SK-N-SH (cell line): ENCODE measurements at regions of chr7 and their contacts with region 1.

Region 1: DNA sequence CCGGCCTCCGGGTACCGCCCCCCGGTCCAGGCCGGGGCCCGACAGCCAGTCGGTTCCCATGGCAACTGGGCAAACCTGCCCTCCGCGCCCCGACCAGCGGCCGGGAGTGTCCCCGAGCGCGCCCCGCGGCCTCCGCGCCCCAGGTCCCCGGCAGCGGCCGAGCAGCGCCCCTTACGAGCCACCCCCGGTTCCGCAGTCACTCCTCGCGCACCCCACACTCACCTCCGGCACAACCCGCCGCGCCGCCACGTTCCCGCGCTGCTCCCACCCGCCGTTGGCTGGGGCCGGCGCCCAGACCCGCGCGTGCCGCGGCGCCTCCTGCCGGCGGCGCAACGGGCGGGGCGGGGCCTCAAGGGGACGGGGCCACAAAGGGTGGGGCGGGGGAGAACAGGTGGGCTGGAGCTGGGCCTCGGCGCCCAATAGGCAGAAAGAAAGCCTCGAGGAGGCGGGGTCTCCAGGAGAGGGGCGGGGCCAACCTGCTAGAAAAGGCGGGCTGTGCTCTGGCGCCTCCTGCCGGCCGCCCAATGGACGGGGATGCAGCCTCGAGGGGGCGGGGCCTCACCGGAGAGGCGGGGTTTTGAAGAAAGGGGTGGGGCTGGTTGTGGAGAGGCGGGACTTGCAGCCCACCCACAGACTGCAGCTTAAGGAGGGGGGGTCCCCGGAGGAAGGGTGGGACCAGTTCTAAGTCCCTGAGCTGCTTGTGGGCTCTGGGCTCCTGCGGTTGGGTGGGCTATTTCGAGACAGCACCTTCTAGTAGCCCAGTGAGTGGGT is at the start of gene RADIL:
- DNase-seq: peak; percentile 100
- H3K4me3 ChIP-seq: peak within 1 kb of the TSS; percentile 70 to 75
- H3K27ac ChIP-seq: peak within 1 kb of the TSS; percentile 89 to 97
- H3K4me1 ChIP-seq: peaks cover 5 to 31% of the 10 kb centered on the region in 2 experiments; a peak in 1 of 4 replicates
- H3K27me3 ChIP-seq: no peaks in the 10 kb centered on the region
- CTCF ChIP-seq: peak; percentile 98
- EP300 ChIP-seq: no peak
- RAD21 ChIP-seq: peak; percentile 85
- polyA plus RNA-seq, gene RADIL: 3.5 and 4.3 TPM in 2 replicates

Region 2: DNA sequence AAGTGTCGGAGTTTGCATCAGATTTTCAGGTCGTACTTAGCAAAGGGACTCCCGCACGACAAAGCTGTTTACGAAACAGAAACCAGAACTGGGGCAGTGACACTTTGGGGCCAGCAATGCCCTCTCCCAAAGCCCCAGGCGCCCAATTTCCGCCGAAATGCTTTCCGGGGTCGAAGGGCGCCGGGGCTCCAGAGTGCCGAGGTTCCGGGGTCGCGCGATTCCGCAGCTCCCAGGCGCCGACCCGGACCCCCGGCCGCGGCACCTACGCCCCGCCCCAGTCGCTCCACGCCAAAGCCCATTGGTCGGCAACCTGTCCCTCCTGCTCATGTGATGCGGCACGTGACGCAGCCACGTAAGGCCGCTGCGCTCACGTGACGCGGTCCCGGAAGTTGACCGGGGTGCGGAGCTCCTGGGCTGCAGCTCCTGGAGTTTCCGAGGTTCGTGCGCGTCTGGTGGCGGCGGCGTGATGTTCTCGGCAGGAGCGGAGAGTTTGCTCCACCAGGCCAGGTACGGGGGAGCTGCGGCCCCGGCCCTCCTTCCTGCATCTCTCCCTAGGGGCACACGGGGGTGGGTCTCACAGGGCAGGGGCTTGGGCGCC is 108.2 kb before region 1 on chr7 and contains the start of gene AP5Z1:
- CTCF ChIA-PET with region 1: interaction called, 11 read pairs
- POLR2A ChIA-PET with region 1: interaction called, 6 read pairs
- DNase-seq: peak; percentile 100
- H3K4me3 ChIP-seq: peak within 1 kb of the TSS; percentile 84 to 99
- H3K27ac ChIP-seq: peak within 1 kb of the TSS; percentile 87 to 89
- H3K4me1 ChIP-seq: peaks cover 9 to 18% of the 10 kb centered on the region in 2 experiments; a peak in 1 of 4 replicates
- H3K27me3 ChIP-seq: no peaks in the 10 kb centered on the region
- CTCF ChIP-seq: 0 out of 2 replicates have a peak, but pooled peaks have one; percentile 7
- EP300 ChIP-seq: peak in 1 of 2 experiments; percentile 24; a peak in 2 of 4 replicates
- RAD21 ChIP-seq: no peak
- polyA plus RNA-seq, gene AP5Z1: 29.5 and 36.7 TPM in 2 replicates

Region 3: DNA sequence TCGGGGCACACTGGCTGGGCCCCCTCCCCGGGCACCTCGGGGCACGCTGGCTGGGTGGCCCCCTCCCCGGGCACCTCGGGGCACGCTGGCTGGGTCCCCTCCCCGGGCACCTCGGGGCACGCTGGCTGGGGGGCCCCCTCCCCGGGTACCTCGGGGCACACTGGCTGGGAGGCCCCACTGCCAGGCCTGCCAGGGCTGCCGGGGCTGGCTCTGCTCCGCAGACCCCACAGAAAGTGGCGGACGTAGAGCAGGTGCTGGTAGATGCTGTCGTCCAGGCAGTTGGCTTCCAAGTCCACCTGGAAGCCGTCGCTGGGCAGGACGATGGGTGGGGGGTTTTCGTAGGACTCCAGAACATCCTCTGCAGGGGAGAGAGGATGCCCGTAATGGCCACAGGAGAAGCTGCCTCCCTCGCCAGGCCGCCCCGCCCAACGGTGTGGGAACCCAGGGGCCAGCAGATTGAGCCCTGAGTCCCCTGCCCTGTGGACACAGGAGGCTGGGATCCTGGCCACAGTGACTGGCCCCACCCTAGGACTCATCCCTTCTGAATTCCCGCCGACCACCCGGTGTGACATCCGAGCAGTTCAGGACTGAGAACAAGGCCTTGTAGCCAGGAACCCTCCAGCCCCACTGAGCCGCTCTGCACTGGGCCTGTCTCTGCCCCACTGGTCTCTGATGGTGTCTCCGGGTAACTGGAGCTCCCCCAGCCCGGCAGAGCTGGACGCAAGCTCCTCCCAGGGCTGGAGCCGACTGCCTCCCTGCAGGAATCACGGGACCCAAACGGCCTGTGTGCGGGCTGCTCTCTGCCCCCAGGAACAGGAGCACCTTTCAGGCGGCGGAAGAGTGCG is 79.9 kb before region 1 on chr7:
- CTCF ChIA-PET with region 1: interaction called, 63 read pairs
- POLR2A ChIA-PET with region 1: interaction called, 12 read pairs
- DNase-seq: no peak
- H3K4me3 ChIP-seq: no peak overlapping the region
- H3K27ac ChIP-seq: no peak overlapping the region
- H3K4me1 ChIP-seq: peaks cover 0 to 3% of the 10 kb centered on the region in 2 experiments; a peak in 1 of 4 replicates
- H3K27me3 ChIP-seq: no peaks in the 10 kb centered on the region
- CTCF ChIP-seq: no peak
- EP300 ChIP-seq: no peak
- RAD21 ChIP-seq: no peak

Region 4: DNA sequence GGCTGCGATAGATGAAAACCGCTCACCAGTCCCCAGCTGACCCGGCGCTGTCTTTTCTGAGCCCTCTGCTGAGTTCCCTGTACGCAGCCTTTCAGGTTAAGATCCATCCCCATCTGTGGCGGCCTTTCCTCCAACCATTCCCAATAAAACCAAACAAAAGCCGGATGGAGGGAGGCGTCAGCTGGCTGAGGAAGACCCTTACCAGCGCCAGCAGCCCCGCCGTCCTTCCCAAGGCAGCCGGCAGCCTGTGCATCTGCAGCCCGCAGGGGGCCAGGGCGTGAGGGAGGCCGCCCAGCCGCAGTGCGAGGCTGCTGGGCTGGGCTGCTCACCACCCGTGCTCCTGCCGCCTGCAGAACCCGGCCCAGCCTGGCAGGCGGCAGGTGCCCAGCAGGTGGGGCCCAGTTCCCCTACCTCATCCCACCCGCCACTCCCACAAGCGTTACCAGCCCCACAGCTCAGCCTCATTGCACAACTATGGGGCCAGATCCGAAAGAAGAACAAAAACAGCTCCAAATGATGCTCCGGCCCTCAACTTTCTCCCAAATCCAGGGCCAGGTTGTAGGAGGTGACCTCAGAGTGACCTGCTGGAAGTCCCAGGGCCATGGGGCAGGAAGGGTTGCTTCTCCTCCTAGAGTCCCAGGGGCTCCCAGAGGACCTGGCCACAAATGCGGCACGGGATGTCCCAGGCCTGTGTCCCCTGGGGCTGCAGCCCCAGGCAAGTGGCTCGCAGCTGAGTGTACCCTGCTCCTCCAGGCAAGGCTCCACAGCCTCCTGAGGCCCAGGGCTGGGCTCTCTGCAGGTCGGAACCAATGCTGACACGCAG is 45.5 kb before region 1 on chr7:
- CTCF ChIA-PET with region 1: interaction called, 645 read pairs
- POLR2A ChIA-PET with region 1: no interaction called
- DNase-seq: peak; percentile 77
- H3K4me3 ChIP-seq: no peak overlapping the region
- H3K27ac ChIP-seq: peak overlapping the region in 1 of 2 experiments; percentile 12; a peak in 1 of 4 replicates
- H3K4me1 ChIP-seq: peaks cover 0 to 32% of the 10 kb centered on the region in 2 experiments; a peak in 1 of 4 replicates
- H3K27me3 ChIP-seq: no peaks in the 10 kb centered on the region
- CTCF ChIP-seq: no peak
- EP300 ChIP-seq: no peak
- RAD21 ChIP-seq: no peak

Region 5: GRCh38 chr7:4871056-4871680 is 12.4 kb before region 1 on chr7:
- CTCF ChIA-PET with region 1: interaction called, 102 read pairs
- POLR2A ChIA-PET with region 1: interaction called, 30 read pairs
- DNase-seq: peak; percentile 57
- H3K4me3 ChIP-seq: no peak overlapping the region
- H3K27ac ChIP-seq: peak overlapping the region in 1 of 2 experiments; percentile 85; a peak in 2 of 4 replicates
- H3K4me1 ChIP-seq: peaks cover 0 to 36% of the 10 kb centered on the region in 2 experiments; a peak in 1 of 4 replicates
- H3K27me3 ChIP-seq: no peaks in the 10 kb centered on the region
- CTCF ChIP-seq: no peak
- EP300 ChIP-seq: no peak
- RAD21 ChIP-seq: no peak

Region 6: GRCh38 chr7:4919969-4920766 is 36.6 kb after region 1 on chr7:
- CTCF ChIA-PET with region 1: interaction called, 13 read pairs
- POLR2A ChIA-PET with region 1: no interaction called
- DNase-seq: no peak
- H3K4me3 ChIP-seq: no peak overlapping the region
- H3K27ac ChIP-seq: no peak overlapping the region
- H3K4me1 ChIP-seq: no peaks in the 10 kb centered on the region
- H3K27me3 ChIP-seq: no peaks in the 10 kb centered on the region
- CTCF ChIP-seq: no peak
- EP300 ChIP-seq: no peak
- RAD21 ChIP-seq: no peak

Region 7: DNA sequence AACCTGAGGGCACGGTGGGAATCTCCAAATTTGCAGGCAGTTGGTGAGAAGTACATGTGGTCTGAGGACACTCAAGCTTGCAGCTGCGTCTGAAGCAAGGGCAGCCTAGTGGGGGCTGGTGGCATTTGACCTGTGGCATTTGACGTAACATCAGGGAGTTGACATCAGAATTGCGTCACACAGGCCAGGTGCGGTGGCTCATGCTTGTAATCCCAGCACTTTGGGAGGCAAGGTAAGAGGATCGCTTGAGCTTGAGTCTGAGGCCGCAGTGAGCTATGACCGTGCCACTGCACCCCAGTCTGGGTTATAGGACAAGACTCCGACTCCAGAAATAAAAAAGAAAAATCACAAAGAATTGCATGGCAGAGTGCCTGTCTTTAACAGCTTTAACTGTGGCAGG is 136.5 kb after region 1 on chr7:
- CTCF ChIA-PET with region 1: no interaction called
- POLR2A ChIA-PET with region 1: no interaction called
- DNase-seq: no peak
- H3K4me3 ChIP-seq: no peak overlapping the region
- H3K27ac ChIP-seq: no peak overlapping the region
- H3K4me1 ChIP-seq: no peaks in the 10 kb centered on the region
- H3K27me3 ChIP-seq: no peaks in the 10 kb centered on the region
- CTCF ChIP-seq: no peak
- EP300 ChIP-seq: no peak
- RAD21 ChIP-seq: no peak

Region 8: GRCh38 chr7:5083311-5083711 is 199.8 kb after region 1 on chr7:
- CTCF ChIA-PET with region 1: interaction called, 57 read pairs
- POLR2A ChIA-PET with region 1: interaction called, 3 read pairs
- DNase-seq: peak; percentile 63
- H3K4me3 ChIP-seq: peak overlapping the region; percentile 9 to 35; a peak in 2 of 4 replicates
- H3K27ac ChIP-seq: no peak overlapping the region
- H3K4me1 ChIP-seq: peaks cover 0 to 10% of the 10 kb centered on the region in 2 experiments; a peak in 1 of 4 replicates
- H3K27me3 ChIP-seq: peaks cover 36% of the 10 kb centered on the region
- CTCF ChIP-seq: no peak
- EP300 ChIP-seq: no peak
- RAD21 ChIP-seq: peak; percentile 2; the same call in 1 of the 2 replicates

Region 9: DNA sequence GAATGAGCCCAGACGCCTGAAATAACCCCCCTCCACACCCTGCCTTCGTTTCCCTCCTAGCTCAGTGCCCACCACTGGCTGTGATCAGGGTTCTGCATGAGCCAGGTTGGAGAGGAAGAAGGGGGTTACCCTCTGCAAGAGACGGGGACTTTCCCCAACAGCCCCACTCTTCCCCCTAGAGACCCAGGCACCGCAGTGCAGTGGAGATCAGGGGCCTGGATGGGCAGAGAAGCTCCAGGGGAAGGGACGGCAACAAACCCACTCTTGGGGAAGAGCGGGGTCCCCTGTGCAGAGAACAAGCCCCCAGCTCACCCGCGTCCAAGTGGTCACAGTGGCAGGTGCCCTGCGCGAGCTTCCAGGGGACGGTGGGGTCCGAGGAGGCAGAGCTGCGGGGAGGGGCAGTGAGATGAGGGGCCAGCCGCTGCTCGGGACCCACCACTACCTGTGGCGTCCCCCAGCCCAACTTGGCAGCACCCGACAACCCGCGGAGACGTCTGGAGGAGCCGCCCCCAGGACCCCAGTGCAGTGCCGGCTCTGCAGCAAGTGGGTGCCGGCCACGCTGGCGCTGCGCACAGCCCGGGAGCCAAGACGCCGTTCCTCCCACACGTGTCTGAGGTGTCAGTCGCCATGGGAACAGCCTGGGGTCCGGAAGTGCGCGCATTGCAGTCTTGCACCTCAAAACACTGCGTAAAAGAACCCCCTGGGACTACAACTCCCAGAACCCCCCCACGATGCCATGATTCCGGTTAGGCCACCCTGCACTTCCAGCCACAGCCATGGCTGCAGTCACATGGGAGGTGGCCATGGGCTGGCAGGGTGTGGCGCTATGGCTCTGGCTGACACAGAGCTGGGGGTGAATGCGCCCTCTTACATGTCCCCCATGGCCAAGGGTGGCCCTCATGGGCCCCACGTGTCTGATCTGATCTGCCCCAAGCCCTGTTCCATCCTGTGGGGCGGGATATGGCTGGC is 260.7 kb after region 1 on chr7:
- CTCF ChIA-PET with region 1: no interaction called
- POLR2A ChIA-PET with region 1: no interaction called
- DNase-seq: peak; percentile 40
- H3K4me3 ChIP-seq: no peak overlapping the region
- H3K27ac ChIP-seq: no peak overlapping the region
- H3K4me1 ChIP-seq: no peaks in the 10 kb centered on the region
- H3K27me3 ChIP-seq: no peaks in the 10 kb centered on the region
- CTCF ChIP-seq: no peak
- EP300 ChIP-seq: no peak
- RAD21 ChIP-seq: no peak